ENCODE measurements at regions of chr18 and their contacts with region 1.

Region 1: DNA sequence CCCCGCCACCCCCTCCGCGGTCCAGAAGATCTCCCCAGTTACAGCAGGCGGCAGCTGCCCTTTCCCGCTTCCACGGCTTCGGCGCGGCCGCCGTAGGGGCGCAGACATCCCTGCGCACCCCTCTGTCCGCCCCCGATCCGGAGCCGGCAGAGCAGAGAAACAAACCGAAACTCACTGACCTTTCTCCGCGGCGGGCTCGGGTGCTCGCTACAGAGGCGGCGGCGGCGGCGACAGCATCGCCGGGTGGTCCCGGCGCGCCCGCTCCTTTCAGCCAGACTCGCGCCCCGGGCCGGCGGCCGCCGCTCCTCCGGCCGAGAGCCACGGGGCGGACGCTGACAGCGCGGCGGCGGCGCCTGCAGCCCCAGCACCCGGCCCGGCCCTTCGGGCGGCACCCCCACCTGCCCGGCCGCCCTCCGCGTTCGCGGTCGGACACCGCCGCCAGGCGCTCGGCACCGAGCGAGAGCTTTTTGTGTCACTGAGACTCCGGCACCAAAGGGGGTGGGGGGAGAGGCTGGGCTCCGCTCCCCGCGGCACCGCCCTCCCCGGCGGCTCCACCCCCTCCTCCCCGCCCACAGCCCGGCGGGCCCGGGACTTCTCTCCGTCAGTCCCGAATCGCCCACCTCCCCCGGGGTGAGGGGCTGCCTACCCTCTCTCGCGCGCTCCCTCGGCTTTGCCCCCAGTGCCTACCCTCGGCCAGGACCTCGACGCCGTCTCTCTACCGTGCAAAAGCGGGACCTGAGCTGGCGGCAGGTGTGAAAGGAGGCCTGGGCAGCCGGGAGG is 1.4 kb upstream of the RNF152 start:
- DNase-seq: peak; percentile 50 to 68
- H3K4me3 ChIP-seq: peak overlapping the region; percentile 58
- H3K4me3 Mint-ChIP-seq: peak overlapping the region; percentile 75
- H3K27ac Mint-ChIP-seq: no peak overlapping the region
- H3K4me1 ChIP-seq: no peaks in the 10 kb centered on the region
- H3K4me1 Mint-ChIP-seq: no peaks in the 10 kb centered on the region
- H3K27me3 ChIP-seq: no peaks in the 10 kb centered on the region
- H3K27me3 Mint-ChIP-seq: no peaks in the 10 kb centered on the region
- CTCF ChIP-seq: peak in 1 of 2 experiments; percentile 10

Region 2: DNA sequence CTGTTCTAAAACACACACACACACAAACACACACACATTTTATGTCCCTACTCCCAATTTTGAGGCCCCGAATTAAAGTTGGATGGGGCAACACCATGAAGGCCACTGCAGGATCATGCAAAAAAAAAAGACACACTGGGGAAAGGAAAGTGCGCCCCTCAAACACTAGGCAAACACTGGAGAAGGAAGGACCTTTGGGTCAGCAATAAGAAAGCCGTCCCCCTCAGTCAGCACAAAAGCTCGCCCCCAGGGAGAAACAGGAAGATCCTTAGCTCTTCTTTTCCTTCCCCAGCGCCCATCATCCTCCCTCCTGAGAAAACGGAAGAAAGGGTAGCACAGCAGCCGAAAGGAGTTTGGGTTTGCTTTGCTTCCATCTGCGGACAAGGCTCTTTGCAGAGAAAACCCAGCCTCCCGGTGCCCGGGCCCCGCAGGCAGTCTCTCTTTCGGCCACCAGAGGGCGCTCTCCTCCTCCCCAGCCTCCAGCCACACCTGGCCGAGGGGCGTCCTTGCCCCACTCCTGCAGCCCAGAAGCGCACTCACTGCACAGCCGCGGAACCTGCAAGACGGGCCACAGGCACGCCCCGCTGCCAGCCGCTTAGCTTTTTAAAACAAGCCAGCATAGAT is 312.5 kb before region 1 on chr18:
- CTCF ChIA-PET with region 1: no interaction called
- POLR2A ChIA-PET with region 1: no interaction called
- intact Hi-C with region 1: loop called (anchors 2 kb)
- DNase-seq: peak; percentile 55 to 73
- H3K4me3 ChIP-seq: peak overlapping the region; percentile 28
- H3K4me3 Mint-ChIP-seq: peak overlapping the region; percentile 64
- H3K27ac Mint-ChIP-seq: peak overlapping the region; percentile 32
- H3K4me1 ChIP-seq: no peaks in the 10 kb centered on the region
- H3K4me1 Mint-ChIP-seq: no peaks in the 10 kb centered on the region
- H3K27me3 ChIP-seq: no peaks in the 10 kb centered on the region
- H3K27me3 Mint-ChIP-seq: no peaks in the 10 kb centered on the region
- CTCF ChIP-seq: peak; percentile 79 to 80

Region 3: GRCh38 chr18:61635901-61636528 is 258.1 kb before region 1 on chr18:
- CTCF ChIA-PET with region 1: no interaction called
- POLR2A ChIA-PET with region 1: no interaction called
- intact Hi-C with region 1: loop called (anchors 1 kb)
- DNase-seq: peak; percentile 46 to 50
- H3K4me3 ChIP-seq: no peak overlapping the region
- H3K4me3 Mint-ChIP-seq: no peak overlapping the region
- H3K27ac Mint-ChIP-seq: no peak overlapping the region
- H3K4me1 ChIP-seq: no peaks in the 10 kb centered on the region; the same call in 1 of the 2 replicates
- H3K4me1 Mint-ChIP-seq: peaks cover 7% of the 10 kb centered on the region
- H3K27me3 ChIP-seq: no peaks in the 10 kb centered on the region
- H3K27me3 Mint-ChIP-seq: no peaks in the 10 kb centered on the region
- CTCF ChIP-seq: peak; percentile 53 to 55

Region 4: DNA sequence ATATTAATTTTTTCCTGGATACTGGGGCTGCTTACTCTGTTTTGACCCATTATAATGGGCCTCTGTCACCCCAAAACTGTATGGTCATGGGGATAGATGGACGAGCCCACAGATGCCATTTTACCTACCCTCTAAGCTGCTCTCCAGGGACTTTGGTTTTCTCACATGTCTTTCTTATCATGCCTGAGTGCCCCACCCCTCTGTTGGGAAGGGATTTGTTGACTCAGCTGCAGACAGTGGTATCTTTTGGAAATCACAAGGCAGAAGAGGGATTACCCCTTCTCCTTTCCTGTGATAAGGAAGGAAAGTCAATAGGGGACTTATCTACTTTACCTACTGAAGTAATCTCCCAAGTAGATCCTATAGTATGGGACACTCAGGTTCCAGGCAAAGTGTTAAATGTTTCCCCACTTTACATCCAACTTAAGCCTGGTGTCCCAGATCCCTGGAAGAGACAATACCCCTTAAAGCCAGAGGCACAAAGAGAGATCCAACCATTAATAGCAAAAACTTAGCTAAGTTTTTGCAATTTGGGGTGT is 184.0 kb before region 1 on chr18:
- CTCF ChIA-PET with region 1: no interaction called
- POLR2A ChIA-PET with region 1: no interaction called
- intact Hi-C with region 1: loop called (anchors 5 kb)
- DNase-seq: peak; percentile 58 to 71
- H3K4me3 ChIP-seq: no peak overlapping the region
- H3K4me3 Mint-ChIP-seq: no peak overlapping the region
- H3K27ac Mint-ChIP-seq: no peak overlapping the region
- H3K4me1 ChIP-seq: peaks cover 10% of the 10 kb centered on the region
- H3K4me1 Mint-ChIP-seq: no peaks in the 10 kb centered on the region
- H3K27me3 ChIP-seq: no peaks in the 10 kb centered on the region
- H3K27me3 Mint-ChIP-seq: no peaks in the 10 kb centered on the region
- CTCF ChIP-seq: no peak

Region 5: GRCh38 chr18:61720496-61720895 is 173.7 kb before region 1 on chr18:
- CTCF ChIA-PET with region 1: no interaction called
- POLR2A ChIA-PET with region 1: no interaction called
- intact Hi-C with region 1: no loop called
- DNase-seq: no peak
- H3K4me3 ChIP-seq: no peak overlapping the region
- H3K4me3 Mint-ChIP-seq: no peak overlapping the region
- H3K27ac Mint-ChIP-seq: no peak overlapping the region
- H3K4me1 ChIP-seq: no peaks in the 10 kb centered on the region
- H3K4me1 Mint-ChIP-seq: no peaks in the 10 kb centered on the region
- H3K27me3 ChIP-seq: no peaks in the 10 kb centered on the region
- H3K27me3 Mint-ChIP-seq: no peaks in the 10 kb centered on the region
- CTCF ChIP-seq: no peak

Measured in Caco-2 (cell line).